ENCODE measurements at regions of chr18 and their contacts with region 1.

Region 1: GRCh38 chr18:28161608-28162599 is 15.0 kb downstream of the CDH2 start:
- DNase-seq: peak; percentile 10 to 37
- H3K4me3 ChIP-seq: no peak overlapping the region
- H3K4me3 Mint-ChIP-seq: peak overlapping the region; percentile 24
- H3K27ac Mint-ChIP-seq: peak overlapping the region; percentile 61
- H3K4me1 ChIP-seq: peaks cover 22% of the 10 kb centered on the region
- H3K4me1 Mint-ChIP-seq: peaks cover 6% of the 10 kb centered on the region
- H3K27me3 ChIP-seq: no peaks in the 10 kb centered on the region
- H3K27me3 Mint-ChIP-seq: no peaks in the 10 kb centered on the region
- CTCF ChIP-seq: no peak

Region 2: DNA sequence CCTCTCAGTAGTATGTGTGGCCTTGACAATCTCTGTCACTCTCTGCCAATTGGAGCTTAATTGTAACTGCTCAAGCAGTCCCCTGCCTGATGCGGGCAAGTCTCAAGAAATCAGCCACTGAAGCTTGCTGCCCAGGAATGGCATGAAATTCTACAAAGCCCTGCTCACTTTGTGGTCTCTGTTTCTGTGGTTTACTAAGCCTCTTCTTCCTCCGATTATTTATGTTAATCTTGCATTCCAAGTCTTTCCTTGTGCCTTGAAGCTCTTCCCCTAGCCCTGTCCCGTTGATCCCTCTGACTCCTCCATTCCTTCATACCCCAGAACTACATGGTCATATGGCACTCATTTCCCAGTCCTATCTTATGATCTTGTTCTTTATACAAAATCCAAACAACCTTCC is 487.5 kb before region 1 on chr18:
- CTCF ChIA-PET with region 1: no interaction called
- POLR2A ChIA-PET with region 1: no interaction called
- intact Hi-C with region 1: no loop called
- DNase-seq: no peak
- H3K4me3 ChIP-seq: no peak overlapping the region
- H3K4me3 Mint-ChIP-seq: no peak overlapping the region
- H3K27ac Mint-ChIP-seq: no peak overlapping the region
- H3K4me1 ChIP-seq: no peaks in the 10 kb centered on the region
- H3K4me1 Mint-ChIP-seq: no peaks in the 10 kb centered on the region
- H3K27me3 ChIP-seq: no peaks in the 10 kb centered on the region
- H3K27me3 Mint-ChIP-seq: no peaks in the 10 kb centered on the region
- CTCF ChIP-seq: no peak

Region 3: DNA sequence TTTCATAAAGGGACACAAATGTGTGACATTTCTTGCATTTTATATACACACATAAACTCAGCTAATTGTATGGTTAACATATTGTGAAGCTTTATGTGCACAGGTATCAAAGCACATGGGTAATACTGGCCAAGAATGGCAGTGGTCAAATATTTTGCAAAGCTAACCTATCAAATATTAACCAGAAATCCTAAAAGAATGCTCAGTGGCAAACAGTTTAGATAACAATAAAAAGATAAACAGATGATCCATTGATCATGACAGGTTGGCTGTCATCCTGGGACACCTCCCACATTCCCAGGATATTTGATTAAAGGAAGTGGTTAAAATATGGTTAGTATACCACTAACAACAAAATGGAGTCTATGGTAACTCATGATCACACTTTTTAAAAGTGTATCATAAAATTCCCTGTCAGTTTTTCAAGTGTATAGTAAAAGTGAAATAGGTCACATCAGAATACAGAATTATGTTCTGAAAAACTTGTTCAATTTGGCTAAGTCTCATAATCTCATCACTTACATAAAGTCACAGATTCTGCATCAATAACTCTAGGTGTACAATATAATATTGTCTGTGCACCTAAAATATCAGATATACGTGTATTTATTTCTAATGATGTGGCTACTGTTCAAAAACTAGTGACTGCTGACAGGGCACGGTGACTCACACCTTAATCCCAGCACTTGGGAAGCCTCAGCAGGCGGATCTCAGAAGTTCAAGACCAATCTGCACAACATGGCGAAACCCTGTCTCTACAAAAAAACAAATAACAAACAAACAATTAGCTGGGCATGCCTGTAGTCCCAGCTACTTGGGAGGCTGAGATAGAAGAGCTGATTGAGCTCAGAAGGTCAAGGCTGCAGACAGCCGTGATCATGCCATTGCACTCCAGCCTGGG is 33.9 kb before region 1 on chr18:
- CTCF ChIA-PET with region 1: no interaction called
- POLR2A ChIA-PET with region 1: no interaction called
- intact Hi-C with region 1: loop called (anchors 5 kb)
- DNase-seq: peak; percentile 30 to 35
- H3K4me3 ChIP-seq: no peak overlapping the region
- H3K4me3 Mint-ChIP-seq: no peak overlapping the region
- H3K27ac Mint-ChIP-seq: no peak overlapping the region
- H3K4me1 ChIP-seq: peaks cover 19% of the 10 kb centered on the region
- H3K4me1 Mint-ChIP-seq: peaks cover 6% of the 10 kb centered on the region
- H3K27me3 ChIP-seq: no peaks in the 10 kb centered on the region
- H3K27me3 Mint-ChIP-seq: no peaks in the 10 kb centered on the region
- CTCF ChIP-seq: no peak

Region 4: DNA sequence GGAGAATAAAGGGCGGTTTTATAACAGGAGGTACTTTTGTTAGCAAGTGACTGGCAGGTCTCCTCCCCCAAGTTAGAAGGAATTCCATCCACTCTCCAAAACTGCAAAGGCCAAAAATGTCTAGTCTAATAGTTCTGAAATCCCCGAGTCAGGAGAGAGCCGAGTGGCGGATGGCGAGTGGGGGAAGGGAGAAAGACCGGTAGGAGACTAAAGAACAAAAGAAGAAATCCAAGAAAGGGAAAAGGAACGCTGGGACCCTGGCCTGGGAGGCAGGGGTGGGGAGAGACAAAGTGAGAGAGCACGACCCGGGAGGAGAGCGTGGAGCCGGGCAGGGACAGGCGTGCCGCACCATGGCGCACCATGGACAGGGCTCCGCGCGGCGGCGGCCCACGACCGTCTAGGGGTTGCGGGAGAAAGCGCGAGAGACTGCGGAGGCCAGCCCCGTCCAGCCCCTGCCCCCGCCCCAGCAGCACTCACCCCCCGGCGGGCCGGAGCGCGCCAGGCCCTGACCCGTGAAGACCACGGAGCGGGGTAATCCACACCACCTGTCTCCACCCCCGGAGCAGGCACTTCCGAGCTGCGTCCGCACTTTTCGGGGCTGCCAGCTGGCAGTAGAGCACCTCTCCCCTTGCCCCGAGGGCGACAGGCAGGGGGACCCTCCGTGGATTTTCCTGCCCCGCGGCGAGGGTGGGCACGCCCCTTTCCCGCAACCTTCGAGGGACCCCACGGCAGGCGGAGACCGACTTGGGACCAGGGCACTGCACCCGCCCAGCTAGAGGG is 13.4 kb after region 1 on chr18:
- CTCF ChIA-PET with region 1: no interaction called
- POLR2A ChIA-PET with region 1: interaction called, 11 read pairs
- intact Hi-C with region 1: no loop called
- DNase-seq: no peak
- H3K4me3 ChIP-seq: no peak overlapping the region
- H3K4me3 Mint-ChIP-seq: no peak overlapping the region
- H3K27ac Mint-ChIP-seq: peak overlapping the region; percentile 57
- H3K4me1 ChIP-seq: no peaks in the 10 kb centered on the region
- H3K4me1 Mint-ChIP-seq: no peaks in the 10 kb centered on the region
- H3K27me3 ChIP-seq: no peaks in the 10 kb centered on the region
- H3K27me3 Mint-ChIP-seq: no peaks in the 10 kb centered on the region
- CTCF ChIP-seq: no peak

Measured in Caco-2 (cell line).